Aorta (tissue), 5 donors: ENCODE measurements at regions of chr10 and their contacts with region 1.

Region 1: GRCh38 chr10:93039721-93040120 is 20.9 kb upstream of the CYP26C1 start:
- DNase-seq: no peak
- ATAC-seq: no peak
- H3K4me3 ChIP-seq: no peak overlapping the region
- H3K27ac ChIP-seq: no peak overlapping the region
- H3K4me1 ChIP-seq: peaks cover 0 to 2% of the 10 kb centered on the region in 2 donors
- H3K27me3 ChIP-seq: no peaks in the 10 kb centered on the region

Region 2: DNA sequence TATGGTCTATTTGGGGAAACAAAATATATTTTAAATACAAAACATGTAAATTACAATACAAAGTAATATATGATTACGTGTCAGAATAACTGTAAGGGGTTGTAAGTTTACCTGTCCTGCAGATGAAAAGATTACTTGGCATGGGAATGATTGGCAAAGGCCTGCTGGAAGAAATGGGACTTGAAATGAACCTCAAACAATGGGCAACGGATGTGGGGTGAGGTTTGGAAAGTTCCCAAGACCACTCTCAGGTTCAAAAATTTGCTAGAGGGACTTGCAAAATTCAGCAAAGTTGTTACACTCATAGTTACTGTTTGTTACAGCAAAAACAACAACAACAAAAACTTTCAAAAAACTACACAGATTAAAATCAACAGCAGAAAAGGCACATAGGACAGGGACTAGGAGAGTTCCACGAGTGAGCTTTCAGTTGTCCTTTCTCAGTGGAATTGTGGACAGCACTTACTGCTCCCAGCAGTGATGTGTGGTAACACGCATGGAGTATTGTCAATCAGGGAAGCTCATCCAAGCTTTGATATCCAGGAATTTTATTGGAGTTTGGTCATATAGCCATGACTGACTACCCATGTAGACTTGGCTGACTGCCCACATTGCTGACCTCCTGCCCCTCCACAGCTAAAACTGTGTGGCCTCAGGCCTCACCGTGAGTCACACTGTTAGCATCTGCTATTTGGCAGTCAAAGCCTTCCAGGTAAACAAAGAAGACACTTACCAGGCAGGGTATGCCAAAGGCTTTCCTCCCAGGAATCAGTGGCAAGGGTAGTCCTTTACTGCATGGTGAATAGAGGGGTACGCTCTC is 147.6 kb before region 1 on chr10:
- intact Hi-C with region 1: loop called in 1 of 2 experiments (anchors 10 kb)
- DNase-seq: peak; percentile 49 to 78
- ATAC-seq: no peak
- H3K4me3 ChIP-seq: no peak overlapping the region
- H3K27ac ChIP-seq: no peak overlapping the region
- H3K4me1 ChIP-seq: peaks cover 0 to 5% of the 10 kb centered on the region in 2 donors
- H3K27me3 ChIP-seq: no peaks in the 10 kb centered on the region

Region 3: DNA sequence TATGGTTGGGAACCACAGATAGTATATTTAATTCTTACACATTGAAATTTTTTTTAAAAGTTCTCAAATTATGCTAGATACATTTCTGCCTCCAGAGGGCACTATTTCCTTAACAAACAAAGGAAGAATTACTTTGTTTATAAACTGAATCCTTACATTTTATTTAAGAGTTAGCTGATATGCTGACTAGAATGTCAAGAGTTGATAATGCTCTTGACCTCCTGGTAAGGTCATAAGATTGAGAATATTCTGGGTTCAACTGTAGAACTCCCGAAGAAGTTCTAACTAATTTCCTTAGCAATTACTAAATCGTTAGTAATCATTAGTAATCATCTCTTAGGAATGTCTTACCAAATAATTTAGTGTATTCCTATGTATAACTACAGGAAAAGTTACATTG is 74.4 kb before region 1 on chr10:
- intact Hi-C with region 1: loop called (anchors 10 kb)
- DNase-seq: no peak
- ATAC-seq: no peak
- H3K4me3 ChIP-seq: no peak overlapping the region
- H3K27ac ChIP-seq: no peak overlapping the region
- H3K4me1 ChIP-seq: peaks cover 0 to 2% of the 10 kb centered on the region in 2 donors
- H3K27me3 ChIP-seq: no peaks in the 10 kb centered on the region

Region 4: GRCh38 chr10:93006435-93007039 is 33.2 kb before region 1 on chr10:
- intact Hi-C with region 1: loop called (anchors 1 to 5 kb)
- DNase-seq: no peak
- ATAC-seq: no peak
- H3K4me3 ChIP-seq: no peak overlapping the region
- H3K27ac ChIP-seq: no peak overlapping the region
- H3K4me1 ChIP-seq: no peaks in the 10 kb centered on the region
- H3K27me3 ChIP-seq: no peaks in the 10 kb centered on the region